ENCODE measurements at regions of chr10 and their contacts with region 1.

Region 1: GRCh38 chr10:103685880-103686669 is 169.3 kb downstream of the SH3PXD2A start:
- DNase-seq: peak; percentile 65 to 87 (median 78)
- ATAC-seq: peak; percentile 52 to 84 (median 79)
- H3K4me3 ChIP-seq: no peak overlapping the region
- H3K27ac ChIP-seq: peak overlapping the region in 1 of 12 donors; percentile 53
- H3K4me1 ChIP-seq: peaks cover 0 to 19% (median 4%) of the 10 kb centered on the region in 12 donors
- H3K27me3 ChIP-seq: no peaks in the 10 kb centered on the region
- CTCF ChIP-seq: peak; percentile 88 to 99 (median 97)
- POLR2A ChIP-seq: no peak

Region 2: DNA sequence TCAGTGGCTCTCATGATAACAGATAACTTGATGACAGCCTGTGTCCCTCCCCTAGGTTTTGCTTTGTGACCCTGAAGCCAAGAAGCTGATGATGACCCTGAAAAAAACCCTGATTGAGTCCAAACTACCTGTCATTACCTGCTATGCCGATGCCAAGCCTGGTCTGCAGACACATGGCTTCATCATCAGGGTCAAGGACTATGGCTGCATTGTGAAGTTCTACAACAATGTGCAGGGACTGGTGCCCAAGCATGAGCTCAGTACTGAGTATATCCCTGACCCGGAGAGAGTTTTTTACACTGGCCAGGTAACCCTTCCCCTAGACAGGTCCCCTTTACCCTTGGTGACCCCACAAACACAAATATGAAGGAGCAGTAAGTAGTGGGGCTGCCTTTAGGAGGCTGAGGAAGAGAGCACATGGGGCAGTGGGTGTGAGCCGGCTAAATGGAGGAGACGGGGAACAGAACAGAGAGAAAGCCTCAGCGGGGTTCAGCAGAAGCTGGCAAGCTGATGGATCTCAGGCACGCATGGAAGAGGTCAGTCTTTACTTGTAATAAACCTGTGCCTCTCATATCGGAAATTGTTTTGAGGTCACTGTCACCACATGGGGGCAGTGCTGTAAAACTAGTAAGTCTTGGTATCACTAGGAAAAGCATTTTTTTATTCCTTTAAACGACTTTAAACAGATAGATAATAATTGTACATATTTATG is 269.5 kb before region 1 on chr10:
- intact Hi-C with region 1: loop called in 1 of 10 experiments (anchors 10 kb)
- DNase-seq: peak in 3 of 5 donors; percentile 58 to 65 (median 61)
- ATAC-seq: peak in 3 of 4 donors; percentile 18 to 57 (median 28)
- H3K4me3 ChIP-seq: no peak overlapping the region
- H3K27ac ChIP-seq: no peak overlapping the region
- H3K4me1 ChIP-seq: no peaks in the 10 kb centered on the region
- H3K27me3 ChIP-seq: no peaks in the 10 kb centered on the region
- CTCF ChIP-seq: peak; percentile 56 to 86 (median 72)
- POLR2A ChIP-seq: no peak

Region 3: GRCh38 chr10:103598654-103599115 is 87.4 kb before region 1 on chr10:
- intact Hi-C with region 1: loop called in 6 of 10 experiments (anchors 1 to 2 kb)
- DNase-seq: no peak
- ATAC-seq: peak; percentile 30 to 70 (median 48)
- H3K4me3 ChIP-seq: no peak overlapping the region
- H3K27ac ChIP-seq: no peak overlapping the region
- H3K4me1 ChIP-seq: peaks cover 0 to 28% (median 6%) of the 10 kb centered on the region in 12 donors
- H3K27me3 ChIP-seq: no peaks in the 10 kb centered on the region
- CTCF ChIP-seq: peak; percentile 35 to 73 (median 66)
- POLR2A ChIP-seq: no peak

Region 4: GRCh38 chr10:103605359-103606095 is 80.5 kb before region 1 on chr10:
- intact Hi-C with region 1: loop called in 5 of 10 experiments (anchors 2 kb)
- DNase-seq: peak in 4 of 5 donors; percentile 46 to 60 (median 54)
- ATAC-seq: peak; percentile 24 to 66 (median 53)
- H3K4me3 ChIP-seq: no peak overlapping the region
- H3K27ac ChIP-seq: no peak overlapping the region
- H3K4me1 ChIP-seq: peaks cover 0 to 10% (median 2%) of the 10 kb centered on the region in 12 donors
- H3K27me3 ChIP-seq: no peaks in the 10 kb centered on the region
- CTCF ChIP-seq: peak; percentile 66 to 84 (median 78)
- POLR2A ChIP-seq: no peak